Common myeloid progenitor, CD34-positive (primary cell): ENCODE measurements at regions of chr9 and their contacts with region 1.

Region 1: GRCh38 chr9:136631038-136632000 is 31.4 kb upstream of the EGFL7 start:
- DNase-seq: peak; percentile 90 to 95 (median 94)
- H3K4me3 ChIP-seq: no peak overlapping the region
- H3K27ac ChIP-seq: no peak overlapping the region
- H3K4me1 ChIP-seq: peaks cover 0 to 53% (median 52%) of the 10 kb centered on the region in 4 experiments
- H3K27me3 ChIP-seq: no peaks in the 10 kb centered on the region

Region 2: GRCh38 chr9:136488247-136489214 is 142.8 kb before region 1 on chr9:
- CTCF ChIA-PET with region 1: interaction called, 238 read pairs
- POLR2A ChIA-PET with region 1: interaction called, 9 read pairs
- DNase-seq: peak; percentile 40 to 56 (median 49)
- H3K4me3 ChIP-seq: no peak overlapping the region
- H3K27ac ChIP-seq: no peak overlapping the region
- H3K4me1 ChIP-seq: peaks cover 0 to 34% (median 21%) of the 10 kb centered on the region in 4 experiments
- H3K27me3 ChIP-seq: no peaks in the 10 kb centered on the region

Region 3: DNA sequence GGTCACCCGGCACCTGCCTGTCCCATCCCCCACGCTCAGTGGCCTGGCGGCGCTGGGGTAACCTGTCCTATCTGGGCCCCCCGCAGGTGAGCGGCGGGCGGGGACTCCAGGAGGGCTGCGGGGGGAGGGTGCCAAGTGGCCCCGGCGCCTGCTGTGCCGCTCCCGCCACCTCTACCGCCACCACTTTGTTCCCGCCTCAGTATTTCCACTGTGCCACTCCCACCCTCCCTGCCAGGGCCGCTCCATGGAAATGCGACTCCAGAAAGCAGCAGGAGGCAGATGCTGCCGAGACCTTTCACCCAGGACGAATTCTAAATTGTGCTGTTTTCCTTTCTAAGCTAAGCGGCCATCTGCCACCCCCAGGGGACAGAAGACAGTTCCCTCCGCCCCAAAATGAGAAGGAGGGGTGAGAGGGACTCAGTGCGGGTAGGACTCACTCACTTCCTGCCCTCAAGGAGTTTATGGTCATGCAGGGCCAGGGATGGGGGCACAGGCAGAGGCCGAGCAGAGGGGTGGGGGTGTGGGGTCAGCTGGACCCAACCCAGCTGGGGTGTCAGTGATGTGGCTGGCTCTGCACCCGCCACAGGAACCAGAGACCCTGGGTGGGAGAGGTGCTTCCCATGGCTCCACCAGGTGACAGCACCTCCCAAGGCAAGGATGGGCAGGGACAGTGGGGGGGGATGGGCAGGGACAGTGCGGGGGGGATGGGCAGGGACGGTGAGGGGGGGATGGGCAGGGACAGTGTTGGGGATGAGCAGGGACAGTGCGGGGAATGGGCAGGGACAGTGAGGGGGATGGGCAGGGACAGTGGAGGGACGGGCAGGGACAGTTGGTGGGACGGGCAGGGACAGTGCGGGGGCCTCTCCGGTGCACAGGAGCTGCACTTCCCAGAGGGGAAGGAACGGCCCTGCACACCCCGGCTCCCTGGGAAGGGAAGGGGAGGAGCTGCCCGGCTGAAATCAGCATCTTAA is 103.3 kb before region 1 on chr9:
- CTCF ChIA-PET with region 1: interaction called, 56 read pairs
- POLR2A ChIA-PET with region 1: interaction called, 12 read pairs
- DNase-seq: peak in 2 of 3 donors; percentile 51 to 65
- H3K4me3 ChIP-seq: peak overlapping the region in 1 of 7 experiments; percentile 64
- H3K27ac ChIP-seq: peak overlapping the region in 1 of 2 experiments; percentile 60
- H3K4me1 ChIP-seq: peaks cover 2 to 70% (median 57%) of the 10 kb centered on the region in 4 experiments
- H3K27me3 ChIP-seq: no peaks in the 10 kb centered on the region

Region 4: GRCh38 chr9:136539427-136540421 is 91.6 kb before region 1 on chr9:
- CTCF ChIA-PET with region 1: interaction called, 90 read pairs
- POLR2A ChIA-PET with region 1: interaction called, 7 read pairs
- DNase-seq: peak; percentile 91 to 96 (median 95)
- H3K4me3 ChIP-seq: peak overlapping the region in 5 of 7 experiments; percentile 40 to 70 (median 52)
- H3K27ac ChIP-seq: peak overlapping the region; percentile 46 to 84
- H3K4me1 ChIP-seq: peaks cover 0 to 95% (median 92%) of the 10 kb centered on the region in 4 experiments
- H3K27me3 ChIP-seq: no peaks in the 10 kb centered on the region

Region 5: DNA sequence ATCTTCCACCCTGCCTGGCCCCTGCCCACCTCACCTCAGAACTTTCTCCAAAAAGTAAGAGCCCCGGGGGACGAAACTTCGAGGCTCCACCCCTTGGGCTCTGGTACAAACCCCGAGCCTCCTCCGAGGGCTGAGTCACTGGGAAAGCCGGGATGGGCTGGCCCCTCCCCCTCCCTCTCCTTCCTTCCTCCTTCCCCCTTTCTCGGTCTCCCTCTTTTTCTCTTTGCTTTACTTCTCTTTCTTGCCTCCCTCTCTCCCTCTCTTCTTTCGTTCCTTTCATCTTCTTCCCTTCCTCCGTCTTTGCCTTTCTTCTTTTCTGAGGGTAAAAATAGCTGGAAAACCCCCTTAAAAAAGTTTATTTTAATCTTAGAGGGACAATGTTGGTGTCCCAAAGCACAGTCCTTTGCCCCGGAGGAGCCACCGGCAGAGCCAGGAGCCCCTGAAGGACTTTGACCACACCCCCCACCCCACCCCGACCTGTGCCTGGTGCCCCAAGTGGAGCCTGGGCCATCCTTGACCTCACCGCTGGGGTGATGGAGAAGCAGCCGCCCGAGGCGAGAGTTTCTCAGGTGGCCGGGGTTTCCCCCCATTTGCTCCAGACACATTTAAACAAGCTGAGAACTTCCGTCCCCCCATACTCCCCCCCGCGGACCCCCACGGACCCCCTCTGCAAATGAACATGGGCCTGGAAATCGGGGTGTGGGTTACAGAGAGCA is 79.8 kb before region 1 on chr9:
- CTCF ChIA-PET with region 1: interaction called, 13 read pairs
- POLR2A ChIA-PET with region 1: interaction called, 10 read pairs
- DNase-seq: no peak
- H3K4me3 ChIP-seq: peak overlapping the region in 2 of 7 experiments; percentile 36 to 51
- H3K27ac ChIP-seq: peak overlapping the region; percentile 25 to 66
- H3K4me1 ChIP-seq: peaks cover 2 to 69% (median 64%) of the 10 kb centered on the region in 4 experiments
- H3K27me3 ChIP-seq: no peaks in the 10 kb centered on the region

Region 6: DNA sequence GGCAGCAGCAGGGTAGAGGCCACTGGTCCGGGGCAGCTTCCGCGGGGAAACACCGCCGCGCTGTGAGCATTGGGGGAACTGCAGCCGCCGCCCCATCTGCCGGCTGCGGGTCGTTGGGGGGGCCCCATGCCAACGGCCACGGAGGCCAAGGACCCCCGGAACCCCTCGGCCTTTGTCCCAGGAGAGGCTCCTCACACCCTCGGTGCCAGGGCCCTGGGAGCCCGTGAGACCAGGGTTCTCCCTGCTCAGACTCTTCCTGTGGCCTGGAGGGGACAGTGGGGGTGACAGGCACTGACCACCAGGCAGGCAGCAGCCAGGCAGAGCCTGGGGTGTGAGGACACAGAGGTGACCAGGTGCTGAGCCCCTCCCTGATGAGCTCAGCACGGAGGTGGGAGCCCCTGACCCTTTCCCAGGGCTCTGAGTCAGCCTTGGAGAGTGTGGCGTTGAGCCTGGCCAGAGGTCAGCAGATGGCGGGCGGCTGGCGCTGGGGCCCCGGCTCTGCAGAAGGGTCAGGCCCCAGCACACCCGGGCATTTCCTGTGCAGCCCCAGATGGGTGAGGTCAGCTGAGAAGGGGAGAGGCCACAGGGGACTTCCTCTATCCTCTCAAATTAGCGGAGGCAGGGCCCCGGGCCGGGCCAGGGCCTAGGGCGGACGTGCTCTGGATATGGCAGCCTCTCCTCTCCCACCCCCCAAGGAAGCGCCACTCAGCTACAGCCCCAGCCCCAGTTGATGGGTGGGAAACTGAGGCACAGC is 13.5 kb after region 1 on chr9:
- CTCF ChIA-PET with region 1: interaction called, 10 read pairs
- POLR2A ChIA-PET with region 1: interaction called, 4 read pairs
- DNase-seq: peak in 2 of 3 donors; percentile 70 to 78
- H3K4me3 ChIP-seq: peak overlapping the region in 5 of 7 experiments; percentile 19 to 65 (median 57)
- H3K27ac ChIP-seq: peak overlapping the region; percentile 40 to 82
- H3K4me1 ChIP-seq: peaks cover 3 to 72% (median 67%) of the 10 kb centered on the region in 4 experiments
- H3K27me3 ChIP-seq: no peaks in the 10 kb centered on the region

Region 7: GRCh38 chr9:136700959-136701667 is 69.8 kb after region 1 on chr9:
- CTCF ChIA-PET with region 1: no interaction called
- POLR2A ChIA-PET with region 1: no interaction called
- DNase-seq: peak; percentile 78 to 96 (median 95)
- H3K4me3 ChIP-seq: peak overlapping the region in 5 of 7 experiments; percentile 22 to 63 (median 46)
- H3K27ac ChIP-seq: peak overlapping the region; percentile 64 to 84
- H3K4me1 ChIP-seq: peaks cover 2 to 83% (median 75%) of the 10 kb centered on the region in 4 experiments
- H3K27me3 ChIP-seq: no peaks in the 10 kb centered on the region